ENCODE measurements at regions of chr10 and their contacts with region 1.

Region 1: GRCh38 chr10:93293999-93294398 is 188.1 kb downstream of the MYOF start:
- DNase-seq: no peak
- H3K4me3 ChIP-seq: no peak overlapping the region
- H3K27ac ChIP-seq: no peak overlapping the region
- H3K4me1 ChIP-seq: no peaks in the 10 kb centered on the region
- H3K27me3 ChIP-seq: no peaks in the 10 kb centered on the region
- CTCF ChIP-seq: no peak
- EP300 ChIP-seq: no peak
- POLR2A ChIP-seq: no peak

Region 2: DNA sequence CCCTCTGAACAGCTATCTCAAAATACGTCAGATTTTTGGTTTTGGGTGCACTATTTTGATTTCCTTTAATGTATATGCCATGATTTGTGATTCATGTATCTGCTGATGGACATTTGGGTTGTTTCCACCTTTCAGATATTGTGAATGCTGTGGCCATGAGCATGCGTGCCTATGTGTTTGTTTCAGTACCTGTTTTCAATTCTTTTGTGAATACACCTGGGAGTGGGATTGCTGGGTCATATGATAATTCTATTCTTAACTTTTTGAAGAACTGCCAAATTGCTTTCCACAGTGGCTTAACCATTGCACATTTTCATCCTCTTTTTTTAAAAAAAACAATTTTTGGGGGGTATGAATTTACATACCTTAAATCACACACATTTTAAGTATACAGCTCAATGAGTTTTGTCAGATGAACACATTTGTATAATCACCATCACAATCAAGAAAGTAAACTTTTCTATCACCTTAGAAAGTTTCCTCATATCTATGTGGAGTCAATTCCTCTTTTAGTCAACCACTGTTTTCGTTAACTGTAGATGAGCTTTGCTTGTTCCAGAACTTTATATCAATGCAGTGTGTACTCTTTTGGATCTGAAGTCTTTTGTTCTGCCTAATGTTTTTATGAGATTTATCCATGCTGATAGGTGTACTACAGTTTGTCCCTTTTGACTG is 183.4 kb before region 1 on chr10:
- in situ Hi-C with region 1: loop called in 3 of 4 experiments (anchors 5 to 25 kb)
- intact Hi-C with region 1: no loop called
- DNase-seq: no peak
- H3K4me3 ChIP-seq: no peak overlapping the region
- H3K27ac ChIP-seq: no peak overlapping the region
- H3K4me1 ChIP-seq: no peaks in the 10 kb centered on the region
- H3K27me3 ChIP-seq: no peaks in the 10 kb centered on the region
- CTCF ChIP-seq: no peak
- EP300 ChIP-seq: no peak
- POLR2A ChIP-seq: no peak